Ascending aorta (tissue), 2 donors: ENCODE measurements at regions of chr11 and their contacts with region 1.

Region 1: GRCh38 chr11:57800444-57801182 is 39.0 kb downstream of the CTNND1 start:
- DNase-seq: no peak
- H3K4me3 ChIP-seq: no peak overlapping the region
- H3K27ac ChIP-seq: peak overlapping the region in 1 of 2 donors; percentile 37
- H3K4me1 ChIP-seq: peaks cover 3 to 10% of the 10 kb centered on the region in 2 donors
- H3K27me3 ChIP-seq: no peaks in the 10 kb centered on the region
- CTCF ChIP-seq: peak; percentile 75 to 78 (median 76)

Region 2: GRCh38 chr11:57741132-57742086 is 59.2 kb before region 1 on chr11 and contains the start of gene SELENOH:
- intact Hi-C with region 1: loop called (anchors 1 kb)
- DNase-seq: peak; percentile 84 to 98
- H3K4me3 ChIP-seq: peak within 1 kb of the TSS; percentile 91 to 93
- H3K27ac ChIP-seq: peak within 1 kb of the TSS; percentile 95 to 97
- H3K4me1 ChIP-seq: peaks cover 0 to 15% of the 10 kb centered on the region in 2 donors
- H3K27me3 ChIP-seq: no peaks in the 10 kb centered on the region
- CTCF ChIP-seq: no peak
- total RNA-seq, gene SELENOH: 113 TPM